ENCODE measurements at regions of chr12 and their contacts with region 1.

Region 1: DNA sequence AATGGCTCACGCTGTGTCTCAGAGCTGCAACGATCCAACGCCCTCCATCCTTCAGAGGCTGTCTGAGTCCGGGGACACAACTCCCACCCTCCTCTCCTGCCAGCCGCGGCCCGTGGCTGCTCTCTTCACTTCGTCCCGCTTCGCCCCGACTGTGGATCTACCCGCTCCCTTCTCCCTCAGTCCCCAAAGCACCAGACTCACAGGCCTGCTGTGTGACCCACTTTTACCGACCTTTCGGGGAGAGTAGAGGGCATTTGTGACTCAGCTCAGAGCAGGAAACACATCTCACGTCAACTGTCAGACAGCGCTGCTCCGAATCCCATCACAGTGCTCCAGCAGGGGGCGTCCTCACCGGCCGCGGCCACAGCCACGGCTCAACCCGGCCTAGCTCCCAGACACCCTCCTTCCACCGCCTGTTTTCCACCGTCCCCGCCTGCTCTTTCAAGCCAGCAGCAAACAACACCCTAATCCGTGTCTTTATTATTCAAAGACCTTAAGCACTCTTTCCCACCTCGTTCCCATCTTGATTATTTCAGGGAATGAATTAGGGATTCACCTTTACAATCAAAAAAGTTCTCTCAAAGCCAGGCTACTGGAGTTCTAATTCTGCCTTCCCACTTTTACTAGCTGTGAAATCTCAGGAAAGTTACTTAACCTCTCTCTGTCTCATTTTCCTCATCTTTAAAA is 5.0 kb upstream of the AQP2 start:
- DNase-seq: peak; percentile 21
- H3K4me3 ChIP-seq: peak overlapping the region; percentile 44
- H3K27ac ChIP-seq: no peak overlapping the region
- H3K27me3 ChIP-seq: peaks cover 13% of the 10 kb centered on the region
- CTCF ChIP-seq: peak; percentile 95

Region 2: GRCh38 chr12:49866859-49867579 is 78.5 kb before region 1 on chr12:
- CTCF ChIA-PET with region 1: interaction called, 21 read pairs
- POLR2A ChIA-PET with region 1: no interaction called
- DNase-seq: peak; percentile 15
- H3K4me3 ChIP-seq: no peak overlapping the region
- H3K27ac ChIP-seq: no peak overlapping the region
- H3K27me3 ChIP-seq: peaks cover 23% of the 10 kb centered on the region
- CTCF ChIP-seq: peak; percentile 98

Region 3: GRCh38 chr12:49907352-49907751 is 38.2 kb before region 1 on chr12:
- CTCF ChIA-PET with region 1: interaction called, 13 read pairs
- POLR2A ChIA-PET with region 1: no interaction called
- DNase-seq: no peak
- H3K4me3 ChIP-seq: no peak overlapping the region
- H3K27ac ChIP-seq: no peak overlapping the region
- H3K27me3 ChIP-seq: peaks cover 2% of the 10 kb centered on the region
- CTCF ChIP-seq: no peak

Region 4: GRCh38 chr12:49959570-49960465 is 14.3 kb after region 1 on chr12:
- CTCF ChIA-PET with region 1: interaction called, 25 read pairs
- POLR2A ChIA-PET with region 1: no interaction called
- DNase-seq: no peak
- H3K4me3 ChIP-seq: no peak overlapping the region
- H3K27ac ChIP-seq: no peak overlapping the region
- H3K27me3 ChIP-seq: peaks cover 87% of the 10 kb centered on the region
- CTCF ChIP-seq: no peak

Measured in AG04450 (cell line).